Endothelial cell of umbilical vein (primary cell): ENCODE measurements at regions of chr13 and their contacts with region 1.

Region 1: DNA sequence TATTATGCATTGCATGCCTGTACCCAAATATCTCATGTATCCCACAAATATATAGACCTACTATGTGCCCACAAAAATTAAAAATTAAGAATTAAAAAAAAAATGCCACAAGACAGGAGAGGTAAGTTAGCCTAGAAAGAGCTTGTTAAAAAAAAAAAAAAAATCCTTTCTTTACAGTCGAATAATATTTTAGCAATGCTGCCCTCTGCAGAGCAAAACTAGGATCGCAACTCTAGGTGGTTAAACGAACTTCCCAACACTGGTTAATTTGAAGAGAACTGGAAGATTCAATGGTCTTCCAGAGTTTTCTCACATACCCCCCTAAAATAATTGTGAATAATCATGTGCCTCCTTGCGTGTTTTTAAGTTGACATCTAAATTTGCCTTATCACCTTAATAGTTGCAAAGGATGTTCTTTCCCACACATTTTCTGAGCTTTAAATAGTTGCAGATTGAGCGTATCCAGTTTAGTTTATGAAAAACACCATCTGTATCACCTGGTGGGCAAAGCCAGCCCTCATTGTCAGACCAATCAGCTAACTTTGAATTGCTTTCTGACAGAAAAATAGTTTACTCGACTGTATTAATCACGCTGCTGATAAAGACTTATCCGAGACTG is 47.4 kb upstream of the RCBTB2 start:
- DNase-seq: peak; percentile 87
- H3K4me3 ChIP-seq: no peak overlapping the region
- H3K27ac ChIP-seq: no peak overlapping the region
- H3K4me1 ChIP-seq: peaks cover 13% of the 10 kb centered on the region
- H3K27me3 ChIP-seq: peaks cover 0 to 4% of the 10 kb centered on the region in 2 experiments
- CTCF ChIP-seq: peak; percentile 45 to 46
- POLR2A ChIP-seq: no peak

Region 2: GRCh38 chr13:48110931-48111721 is 469.2 kb before region 1 on chr13:
- CTCF ChIA-PET with region 1: no interaction called
- POLR2A ChIA-PET with region 1: no interaction called
- dilution Hi-C with region 1: no loop called
- intact Hi-C with region 1: no loop called
- DNase-seq: peak; percentile 56
- H3K4me3 ChIP-seq: no peak overlapping the region
- H3K27ac ChIP-seq: peak overlapping the region; percentile 53
- H3K4me1 ChIP-seq: peaks cover 26% of the 10 kb centered on the region
- H3K27me3 ChIP-seq: peaks cover under 1 to 5% of the 10 kb centered on the region in 2 experiments
- CTCF ChIP-seq: no peak
- POLR2A ChIP-seq: no peak

Region 3: GRCh38 chr13:48233046-48233907 is 347.0 kb before region 1 on chr13 and contains the start of gene ITM2B:
- CTCF ChIA-PET with region 1: interaction called, 7 read pairs
- POLR2A ChIA-PET with region 1: no interaction called
- dilution Hi-C with region 1: no loop called
- intact Hi-C with region 1: loop called (anchors 5 kb)
- DNase-seq: peak; percentile 76
- H3K4me3 ChIP-seq: peak within 1 kb of the TSS; percentile 67 to 95 (median 77)
- H3K27ac ChIP-seq: peak within 1 kb of the TSS; percentile 86
- H3K4me1 ChIP-seq: peaks cover 45% of the 10 kb centered on the region
- H3K27me3 ChIP-seq: peaks cover 2 to 4% of the 10 kb centered on the region in 2 experiments
- CTCF ChIP-seq: peak; percentile 34 to 36
- POLR2A ChIP-seq: peak; percentile 55
- total RNA-seq, gene ITM2B: 245 and 271 TPM in 2 replicates

Region 4: GRCh38 chr13:48334534-48335127 is 245.7 kb before region 1 on chr13:
- CTCF ChIA-PET with region 1: interaction called, 393 read pairs
- POLR2A ChIA-PET with region 1: interaction called, 3 read pairs
- dilution Hi-C with region 1: no loop called
- intact Hi-C with region 1: loop called (anchors 1 kb)
- DNase-seq: peak; percentile 71
- H3K4me3 ChIP-seq: no peak overlapping the region
- H3K27ac ChIP-seq: no peak overlapping the region
- H3K4me1 ChIP-seq: no peaks in the 10 kb centered on the region
- H3K27me3 ChIP-seq: no peaks in the 10 kb centered on the region
- CTCF ChIP-seq: peak; percentile 11 to 27
- POLR2A ChIP-seq: no peak

Region 5: DNA sequence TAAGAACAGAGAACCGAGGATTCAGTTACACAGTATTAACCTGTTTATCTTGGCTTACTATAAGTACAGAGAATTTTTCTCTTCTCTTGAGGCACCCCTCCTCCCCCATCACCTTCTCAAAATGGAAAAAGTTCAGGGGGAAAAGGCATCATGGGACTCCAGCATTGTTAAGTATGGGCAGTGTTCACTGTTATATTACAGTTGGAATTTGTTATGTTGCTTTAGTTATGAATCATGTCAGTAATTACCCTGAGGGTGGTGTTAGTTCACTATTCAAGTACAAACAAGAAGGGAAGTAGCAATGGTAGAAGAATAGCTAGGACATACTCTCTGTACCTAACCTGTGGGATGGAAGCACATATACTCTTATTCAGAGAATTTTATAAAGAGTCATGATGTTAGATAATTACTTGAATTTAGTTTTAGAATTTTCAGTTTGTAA is 179.4 kb before region 1 on chr13:
- CTCF ChIA-PET with region 1: interaction called, 74 read pairs
- POLR2A ChIA-PET with region 1: no interaction called
- dilution Hi-C with region 1: no loop called
- intact Hi-C with region 1: loop called (anchors 1 kb)
- DNase-seq: peak; percentile 96
- H3K4me3 ChIP-seq: peak overlapping the region in 1 of 3 experiments; percentile 26
- H3K27ac ChIP-seq: peak overlapping the region; percentile 75
- H3K4me1 ChIP-seq: peaks cover 44% of the 10 kb centered on the region
- H3K27me3 ChIP-seq: no peaks in the 10 kb centered on the region
- CTCF ChIP-seq: no peak
- POLR2A ChIP-seq: no peak

Region 6: DNA sequence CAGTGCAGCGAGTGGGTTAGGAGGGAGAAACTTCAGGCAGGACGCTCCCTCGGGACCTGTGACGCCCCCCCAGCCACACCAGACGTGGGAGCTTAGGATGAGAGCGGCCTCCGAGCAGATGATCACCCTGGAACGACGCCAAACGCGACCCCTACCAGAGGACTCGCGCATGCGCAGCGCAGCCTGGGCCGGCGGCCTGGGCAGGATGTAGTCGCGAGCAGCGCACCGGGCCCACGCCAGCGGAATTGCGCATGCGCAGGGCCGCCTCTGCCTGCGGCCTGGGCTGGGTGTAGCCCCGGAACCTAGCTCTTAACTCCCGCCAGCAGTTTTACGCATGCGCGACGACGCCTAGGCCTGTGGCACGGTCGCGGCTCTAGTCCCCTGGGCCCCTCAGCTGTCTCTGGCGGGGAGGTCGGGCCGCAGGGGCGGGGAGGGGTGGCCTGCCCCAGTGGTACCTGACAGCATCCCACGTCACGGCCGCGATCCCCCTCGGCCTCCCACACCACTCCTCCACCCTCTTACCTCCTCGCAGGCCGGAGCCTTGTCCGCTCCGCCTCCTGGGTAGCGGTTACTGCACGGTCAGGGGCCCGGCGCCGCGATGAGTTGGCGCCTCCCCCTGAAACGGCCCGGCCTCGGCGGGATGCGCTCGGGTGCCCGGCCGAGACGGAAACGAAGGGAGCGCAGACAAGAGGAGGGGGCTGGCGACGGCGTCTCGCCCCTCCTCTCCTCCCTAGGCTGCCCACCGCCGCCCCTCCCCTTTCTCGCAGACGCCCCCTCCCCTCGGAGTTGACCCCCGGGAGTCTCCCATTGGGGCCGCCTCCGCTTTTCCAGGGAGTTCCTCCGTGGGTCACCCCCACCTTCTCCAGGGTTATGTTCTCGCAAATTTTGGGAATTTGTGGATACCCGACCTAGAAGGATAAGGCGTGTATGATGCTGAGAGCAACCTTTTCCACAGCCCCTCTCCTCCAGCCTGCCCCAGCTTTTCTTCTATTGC is 47.5 kb before region 1 on chr13 and contains the start of gene RCBTB2:
- CTCF ChIA-PET with region 1: interaction called, 13 read pairs
- POLR2A ChIA-PET with region 1: interaction called, 6 read pairs
- dilution Hi-C with region 1: no loop called
- intact Hi-C with region 1: loop called (anchors 2 kb)
- DNase-seq: peak; percentile 99
- H3K4me3 ChIP-seq: peak within 1 kb of the TSS; percentile 74 to 90 (median 78)
- H3K27ac ChIP-seq: peak within 1 kb of the TSS; percentile 73
- H3K4me1 ChIP-seq: peaks cover 10% of the 10 kb centered on the region
- H3K27me3 ChIP-seq: no peaks in the 10 kb centered on the region
- CTCF ChIP-seq: no peak
- POLR2A ChIP-seq: peak; percentile 95
- total RNA-seq, gene RCBTB2: 9.9 and 12.6 TPM in 2 replicates

Region 7: DNA sequence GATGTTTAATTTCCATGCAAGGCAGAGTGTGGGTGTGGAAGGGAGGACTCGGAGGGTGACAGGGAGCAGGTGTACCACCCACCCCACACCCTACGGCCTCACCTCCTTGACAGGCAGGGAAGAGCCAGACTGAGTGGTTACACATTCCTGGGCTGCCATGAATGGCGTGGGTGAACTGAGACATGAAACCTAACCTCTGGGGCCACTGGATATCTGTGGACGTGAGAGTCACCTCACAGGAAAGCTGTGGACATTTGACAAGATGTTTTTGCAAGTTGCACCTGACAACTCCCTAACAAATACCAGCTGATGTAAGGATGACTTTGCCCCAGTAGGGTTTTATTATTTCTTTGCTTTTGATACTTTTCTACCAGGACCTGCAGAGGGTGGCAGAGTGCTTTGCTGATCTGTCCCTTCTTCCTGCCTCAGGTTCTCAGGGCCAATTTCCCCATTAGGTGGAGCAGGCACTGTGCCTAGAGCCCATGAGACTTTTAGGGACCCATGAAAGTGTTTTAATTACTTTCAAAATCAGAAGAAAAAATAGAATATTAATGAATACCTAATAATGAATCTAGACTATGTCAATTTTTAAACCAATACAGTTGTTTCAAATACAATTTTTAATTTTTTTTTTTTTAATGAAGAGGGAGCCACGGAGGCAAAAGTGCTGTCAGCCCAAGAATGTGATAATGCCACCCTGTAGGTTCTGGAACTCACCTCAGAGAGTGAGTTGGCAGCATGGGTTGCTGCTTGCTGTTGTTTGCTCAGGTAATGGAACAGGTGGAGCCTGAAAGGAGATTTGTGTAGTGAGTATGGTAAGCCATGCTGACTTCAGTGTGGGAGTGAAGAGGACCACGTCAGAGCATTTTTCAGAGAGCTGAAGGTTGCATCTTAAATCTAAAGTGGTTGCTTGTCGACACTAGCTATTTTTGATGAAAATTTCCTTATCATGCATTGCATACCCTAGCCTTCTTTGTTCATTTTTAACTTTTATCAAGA is 15.4 kb after region 1 on chr13:
- CTCF ChIA-PET with region 1: interaction called, 11 read pairs
- POLR2A ChIA-PET with region 1: no interaction called
- dilution Hi-C with region 1: no loop called
- intact Hi-C with region 1: no loop called
- DNase-seq: peak; percentile 91
- H3K4me3 ChIP-seq: no peak overlapping the region
- H3K27ac ChIP-seq: no peak overlapping the region
- H3K4me1 ChIP-seq: peaks cover 6% of the 10 kb centered on the region
- H3K27me3 ChIP-seq: peaks cover 4 to 7% of the 10 kb centered on the region in 2 experiments
- CTCF ChIP-seq: peak; percentile 49 to 66
- POLR2A ChIP-seq: no peak